Mucosa of descending colon (tissue), 3 donors: ENCODE measurements at regions of chr1 and their contacts with region 1.

Region 1: DNA sequence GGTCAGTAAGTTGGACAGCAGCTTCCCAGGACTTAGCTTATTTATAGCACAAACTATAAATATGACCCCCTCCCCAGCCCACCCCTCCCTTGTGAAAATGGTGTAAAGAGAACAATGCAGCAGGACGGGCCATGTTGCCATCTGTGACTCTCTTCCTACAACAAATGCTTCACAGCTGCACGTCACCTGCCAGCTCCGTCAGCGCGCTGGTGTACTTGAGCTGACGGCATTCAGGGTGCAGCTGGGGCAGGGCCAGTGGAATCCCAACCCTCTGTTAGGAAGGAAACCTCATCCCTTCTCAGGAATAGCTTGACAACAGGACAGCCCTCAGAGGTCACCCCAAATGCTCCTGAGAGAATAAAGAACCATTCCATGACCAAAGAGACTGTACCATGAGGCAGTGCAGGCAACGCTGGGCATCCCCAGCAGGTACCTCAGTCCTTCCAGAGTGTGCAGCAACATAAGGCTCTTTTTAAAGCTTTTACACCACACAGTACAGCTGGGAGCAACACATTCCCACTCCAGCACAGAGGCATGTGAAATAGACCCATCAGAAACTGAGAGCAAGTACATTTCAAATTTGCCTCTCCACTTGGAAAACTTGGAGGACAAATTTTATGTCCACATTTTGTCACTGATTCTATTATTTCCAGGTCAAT is 85.0 kb downstream of the ATP1A1 start:
- DNase-seq: no peak
- ATAC-seq: no peak
- H3K4me3 ChIP-seq: no peak overlapping the region
- H3K4me1 ChIP-seq: no peaks in the 10 kb centered on the region
- CTCF ChIP-seq: no peak

Region 2: GRCh38 chr1:116257341-116257767 is 200.7 kb before region 1 on chr1:
- intact Hi-C with region 1: loop called in 1 of 2 experiments (anchors 5 kb)
- DNase-seq: no peak
- ATAC-seq: peak; percentile 60
- H3K4me3 ChIP-seq: no peak overlapping the region
- H3K4me1 ChIP-seq: peaks cover 52% of the 10 kb centered on the region
- CTCF ChIP-seq: no peak

Region 3: DNA sequence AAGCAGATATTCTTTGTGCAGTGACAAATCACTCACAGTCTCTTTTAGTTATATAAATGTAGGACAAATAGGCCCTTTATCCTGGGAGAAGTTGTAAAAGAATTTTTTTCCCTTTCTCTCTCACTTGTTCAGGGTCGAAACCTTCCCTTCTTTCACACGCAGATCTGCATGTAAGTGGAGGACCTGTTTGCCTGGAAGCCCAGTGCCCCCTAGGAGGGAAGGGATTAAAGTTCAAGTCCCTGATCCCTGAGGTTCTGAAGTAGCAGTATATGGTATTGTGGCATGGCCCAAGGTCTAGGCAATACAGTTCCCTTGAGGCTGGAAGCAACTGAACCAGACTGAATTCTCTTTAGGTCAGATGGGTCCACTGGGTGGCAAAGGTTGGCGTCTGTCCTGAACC is 403.1 kb after region 1 on chr1:
- intact Hi-C with region 1: no loop called
- DNase-seq: no peak
- ATAC-seq: no peak
- H3K4me3 ChIP-seq: no peak overlapping the region
- H3K4me1 ChIP-seq: no peaks in the 10 kb centered on the region
- CTCF ChIP-seq: no peak